GM10248 (cell line): ENCODE measurements at regions of chr13 and their contacts with region 1.

Region 1: DNA sequence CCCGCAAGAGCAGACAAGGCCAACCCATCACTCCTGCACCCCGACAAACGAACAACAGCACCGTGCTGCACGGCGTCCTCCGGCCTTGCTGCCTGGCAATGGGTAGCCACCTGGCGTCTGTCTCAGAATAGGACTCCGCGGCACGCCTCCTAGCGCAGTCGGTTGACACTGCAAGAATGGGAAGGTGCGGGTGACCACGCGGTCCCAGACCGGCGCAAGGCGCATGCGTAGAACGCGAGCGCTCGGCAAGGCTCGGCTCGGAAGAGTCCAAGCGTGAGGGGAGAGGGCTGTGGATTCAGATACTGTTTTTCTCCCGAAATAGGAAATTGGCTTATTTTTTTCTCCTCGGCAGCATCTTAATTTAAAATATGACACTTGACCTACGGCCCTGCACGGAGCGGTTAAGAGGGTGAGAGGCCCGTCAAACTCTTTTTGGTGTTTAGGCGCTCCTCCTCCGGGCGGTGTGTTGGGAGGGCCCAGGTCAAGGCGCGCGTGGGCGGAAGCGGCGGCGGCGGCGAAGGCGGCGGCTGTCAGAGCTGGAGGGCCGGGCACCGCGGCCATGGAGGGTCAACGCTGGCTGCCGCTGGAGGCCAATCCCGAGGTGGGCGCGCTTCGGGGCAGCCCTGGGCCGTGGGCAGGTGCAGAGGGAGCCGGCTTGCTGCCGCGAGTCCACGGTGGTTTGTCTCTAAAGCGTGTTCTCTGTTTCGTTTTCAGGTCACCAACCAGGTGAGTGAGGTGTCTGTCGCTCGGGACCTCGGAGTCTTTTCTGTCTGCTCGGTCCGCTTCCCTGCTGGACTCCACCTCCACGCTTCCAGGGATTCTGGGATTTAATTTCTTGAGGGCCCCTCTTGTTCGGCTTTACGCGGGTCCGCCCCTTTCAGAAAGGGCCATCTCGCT is at the start of gene UCHL3:
- DNase-seq: peak; percentile 98
- CTCF ChIP-seq: peak; percentile 92

Region 2: DNA sequence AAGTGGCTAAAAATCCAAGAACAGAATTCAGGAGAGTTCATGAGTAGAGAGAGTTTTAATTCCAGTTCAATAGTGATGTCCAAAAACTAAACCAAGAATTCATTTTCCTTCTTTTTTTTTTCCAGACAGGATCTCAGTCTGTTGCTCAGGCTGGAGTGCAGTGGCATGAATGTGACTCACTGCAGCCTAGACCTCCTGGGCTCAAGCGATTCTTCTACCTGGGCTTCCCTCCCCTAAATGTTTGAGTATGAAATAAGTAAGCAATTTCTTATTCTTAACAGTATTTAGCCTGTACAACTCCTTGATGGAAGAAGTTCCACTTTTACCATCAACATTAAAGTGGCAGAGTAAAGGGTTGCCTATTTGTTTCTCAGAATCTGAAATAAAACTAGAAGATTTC is 15.6 kb before region 1 on chr13:
- CTCF ChIA-PET with region 1: interaction called, 13 read pairs
- POLR2A ChIA-PET with region 1: interaction called, 3 read pairs
- DNase-seq: no peak
- CTCF ChIP-seq: no peak

Region 3: DNA sequence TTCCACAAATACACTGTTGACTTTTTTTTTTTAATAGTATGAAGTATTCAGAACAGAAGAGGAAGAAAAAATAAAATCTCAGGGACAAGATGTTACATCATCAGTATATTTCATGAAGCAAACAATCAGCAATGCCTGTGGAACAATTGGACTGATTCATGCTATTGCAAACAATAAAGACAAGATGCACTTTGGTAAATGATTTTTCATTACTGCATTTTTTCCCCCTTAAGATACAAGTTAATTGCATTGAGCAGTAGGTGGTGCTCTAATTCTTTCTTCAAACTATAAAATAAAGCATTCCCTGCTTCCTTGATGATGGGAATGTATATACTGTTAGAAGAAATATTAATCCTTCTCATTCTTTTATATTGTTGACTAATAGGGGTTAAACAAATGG is 17.1 kb after region 1 on chr13:
- CTCF ChIA-PET with region 1: interaction called, 7 read pairs
- POLR2A ChIA-PET with region 1: interaction called, 11 read pairs
- DNase-seq: no peak
- CTCF ChIP-seq: peak; percentile 52